ENCODE measurements at regions of chr17 and their contacts with region 1.

Region 1: GRCh38 chr17:45060797-45061605 is at the start of gene NMT1:
- DNase-seq: peak; percentile 100
- ATAC-seq: peak; percentile 95
- H3K4me3 ChIP-seq: peak within 1 kb of the TSS; percentile 91 to 99 (median 97)
- H3K27ac ChIP-seq: peak within 1 kb of the TSS; percentile 94
- H3K4me1 ChIP-seq: peaks cover 48% of the 10 kb centered on the region
- H3K27me3 ChIP-seq: no peaks in the 10 kb centered on the region; a peak in 1 of 5 replicates
- CTCF ChIP-seq: peak; percentile 15; the same call in 1 of the 2 replicates
- EP300 ChIP-seq: peak in 1 of 2 experiments; percentile 40; a peak in 2 of 4 replicates
- POLR2A ChIP-seq: peak; percentile 91 to 96
- RAD21 ChIP-seq: no peak; the same call in none of the 2 replicates
- total RNA-seq, gene NMT1: 142 and 194 TPM in 2 replicates

Region 2: DNA sequence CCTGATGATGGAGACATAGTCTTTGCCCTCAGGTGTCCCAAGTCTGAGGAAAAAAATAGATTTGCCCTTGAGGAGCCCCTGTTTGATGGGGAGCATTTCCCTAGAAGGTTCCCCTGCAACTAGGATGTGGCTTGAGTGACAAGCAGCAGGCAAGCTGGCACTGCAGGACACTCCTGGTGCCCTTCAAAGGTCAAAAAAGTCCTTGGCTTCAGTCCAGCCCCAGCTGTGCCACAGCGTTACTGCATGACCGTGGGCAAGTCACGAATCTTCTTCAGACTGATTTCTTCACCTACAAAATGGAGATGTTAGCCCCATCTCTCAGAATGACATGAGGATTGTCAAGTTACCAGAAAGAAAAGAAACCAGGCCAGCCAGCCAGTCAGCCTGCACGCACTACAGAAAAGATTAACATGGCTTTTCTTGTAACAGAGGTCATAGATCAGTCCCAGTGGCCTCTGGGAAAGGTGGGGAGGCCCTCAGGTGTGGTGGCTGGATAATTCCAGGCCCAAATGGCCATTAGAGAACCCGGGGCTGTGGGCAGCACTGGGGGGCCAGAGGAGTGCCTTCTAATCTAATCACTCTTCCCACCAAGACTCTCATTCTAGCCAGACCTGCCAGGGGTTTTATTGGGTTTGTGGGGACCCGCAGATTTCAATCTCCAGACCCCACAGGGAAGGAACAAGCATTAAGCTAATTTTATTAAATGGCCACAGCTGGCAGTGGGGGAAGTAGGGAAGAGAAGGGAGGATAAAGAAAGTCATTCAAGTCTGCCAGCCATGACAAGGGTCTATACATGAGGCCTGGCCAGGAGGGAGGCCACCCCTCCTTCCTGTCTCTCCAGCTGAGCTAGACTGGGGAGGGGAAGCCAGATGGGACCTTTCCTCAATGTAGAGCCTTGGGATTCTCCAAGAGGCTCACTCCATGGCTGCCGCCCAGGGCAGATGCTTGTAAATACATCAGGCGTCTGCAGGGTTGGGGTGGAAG is 103.7 kb before region 1 on chr17:
- CTCF ChIA-PET with region 1: no interaction called
- POLR2A ChIA-PET with region 1: no interaction called
- in situ Hi-C with region 1: no loop called
- intact Hi-C with region 1: no loop called
- DNase-seq: no peak
- ATAC-seq: peak; percentile 37
- H3K4me3 ChIP-seq: peak overlapping the region; percentile 25 to 58 (median 39)
- H3K27ac ChIP-seq: no peak overlapping the region
- H3K4me1 ChIP-seq: peaks cover 34% of the 10 kb centered on the region
- H3K27me3 ChIP-seq: peaks cover 0 to 14% of the 10 kb centered on the region in 2 experiments; a peak in 1 of 5 replicates
- CTCF ChIP-seq: no peak
- EP300 ChIP-seq: no peak
- POLR2A ChIP-seq: no peak
- RAD21 ChIP-seq: no peak

Region 3: DNA sequence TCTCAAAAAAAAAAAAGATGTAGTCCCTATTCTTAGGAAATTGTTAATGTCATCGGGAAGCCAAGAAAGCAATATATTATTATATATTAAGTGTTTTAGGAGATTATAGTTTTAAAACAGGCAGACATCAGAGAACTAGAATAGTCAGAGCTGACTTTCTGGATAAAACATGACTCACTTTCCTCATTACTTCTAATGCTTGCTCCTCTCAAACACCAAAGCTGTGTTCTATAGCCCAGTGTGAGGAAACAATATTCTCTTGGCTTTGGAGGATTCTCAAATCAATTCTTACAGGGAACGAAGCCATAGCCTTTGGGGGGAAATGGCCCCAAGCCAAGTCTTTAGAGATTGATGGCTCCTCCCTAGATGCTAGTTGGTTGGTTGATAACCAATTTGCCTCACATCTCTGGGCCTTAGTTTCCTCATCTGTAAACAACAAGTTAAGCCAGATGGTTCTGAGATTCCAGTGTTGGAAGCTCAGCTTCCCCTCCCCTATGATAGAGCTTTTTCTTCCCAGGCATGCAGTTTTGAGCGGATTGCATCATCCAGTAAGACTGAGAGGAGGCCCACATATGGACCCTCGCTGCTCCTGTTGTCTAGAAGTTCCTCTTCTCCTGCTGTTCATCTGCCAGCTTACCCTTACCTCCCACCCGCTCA is 12.5 kb after region 1 on chr17:
- CTCF ChIA-PET with region 1: no interaction called
- POLR2A ChIA-PET with region 1: interaction called, 28 read pairs
- in situ Hi-C with region 1: no loop called
- intact Hi-C with region 1: no loop called
- DNase-seq: no peak
- ATAC-seq: no peak
- H3K4me3 ChIP-seq: no peak overlapping the region
- H3K27ac ChIP-seq: no peak overlapping the region
- H3K4me1 ChIP-seq: peaks cover 8% of the 10 kb centered on the region; the same call in 1 of the 2 replicates
- H3K27me3 ChIP-seq: no peaks in the 10 kb centered on the region
- CTCF ChIP-seq: no peak
- EP300 ChIP-seq: no peak
- POLR2A ChIP-seq: no peak
- RAD21 ChIP-seq: no peak

Region 4: GRCh38 chr17:45092932-45093430 is 32.0 kb after region 1 on chr17:
- CTCF ChIA-PET with region 1: no interaction called
- POLR2A ChIA-PET with region 1: interaction called, 11 read pairs
- in situ Hi-C with region 1: no loop called
- intact Hi-C with region 1: no loop called
- DNase-seq: peak; percentile 82
- ATAC-seq: peak; percentile 85
- H3K4me3 ChIP-seq: no peak overlapping the region
- H3K27ac ChIP-seq: peak overlapping the region; percentile 26
- H3K4me1 ChIP-seq: peaks cover 23% of the 10 kb centered on the region
- H3K27me3 ChIP-seq: no peaks in the 10 kb centered on the region
- CTCF ChIP-seq: no peak
- EP300 ChIP-seq: no peak
- POLR2A ChIP-seq: no peak
- RAD21 ChIP-seq: no peak

Region 5: GRCh38 chr17:45123930-45124796 is 63.2 kb after region 1 on chr17:
- CTCF ChIA-PET with region 1: no interaction called
- POLR2A ChIA-PET with region 1: interaction called, 10 read pairs
- in situ Hi-C with region 1: no loop called
- intact Hi-C with region 1: no loop called
- DNase-seq: peak; percentile 86
- ATAC-seq: peak; percentile 79
- H3K4me3 ChIP-seq: peak overlapping the region; percentile 19 to 60 (median 29); a peak in 2 of 6 replicates
- H3K27ac ChIP-seq: peak overlapping the region; percentile 63
- H3K4me1 ChIP-seq: peaks cover 67% of the 10 kb centered on the region
- H3K27me3 ChIP-seq: no peaks in the 10 kb centered on the region
- CTCF ChIP-seq: 0 out of 2 replicates have a peak, but pooled peaks have one; percentile 5
- EP300 ChIP-seq: peak; percentile 25 to 74; a peak in 2 of 4 replicates
- POLR2A ChIP-seq: no peak
- RAD21 ChIP-seq: 0 out of 2 replicates have a peak, but pooled peaks have one; percentile 10

Region 6: GRCh38 chr17:45218895-45219661 is 158.1 kb after region 1 on chr17:
- CTCF ChIA-PET with region 1: no interaction called
- POLR2A ChIA-PET with region 1: no interaction called
- in situ Hi-C with region 1: no loop called
- intact Hi-C with region 1: no loop called
- DNase-seq: peak; percentile 76
- ATAC-seq: peak; percentile 79
- H3K4me3 ChIP-seq: no peak overlapping the region
- H3K27ac ChIP-seq: no peak overlapping the region
- H3K4me1 ChIP-seq: peaks cover 6% of the 10 kb centered on the region; the same call in 1 of the 2 replicates
- H3K27me3 ChIP-seq: peaks cover 17 to 44% of the 10 kb centered on the region in 2 experiments; a peak in 4 of 5 replicates
- CTCF ChIP-seq: peak; percentile 98
- EP300 ChIP-seq: no peak
- POLR2A ChIP-seq: no peak
- RAD21 ChIP-seq: peak; percentile 94

Measured in HepG2 (cell line).